Adrenal gland (tissue), 19 donors: ENCODE measurements at regions of chr11 and their contacts with region 1.

Region 1: DNA sequence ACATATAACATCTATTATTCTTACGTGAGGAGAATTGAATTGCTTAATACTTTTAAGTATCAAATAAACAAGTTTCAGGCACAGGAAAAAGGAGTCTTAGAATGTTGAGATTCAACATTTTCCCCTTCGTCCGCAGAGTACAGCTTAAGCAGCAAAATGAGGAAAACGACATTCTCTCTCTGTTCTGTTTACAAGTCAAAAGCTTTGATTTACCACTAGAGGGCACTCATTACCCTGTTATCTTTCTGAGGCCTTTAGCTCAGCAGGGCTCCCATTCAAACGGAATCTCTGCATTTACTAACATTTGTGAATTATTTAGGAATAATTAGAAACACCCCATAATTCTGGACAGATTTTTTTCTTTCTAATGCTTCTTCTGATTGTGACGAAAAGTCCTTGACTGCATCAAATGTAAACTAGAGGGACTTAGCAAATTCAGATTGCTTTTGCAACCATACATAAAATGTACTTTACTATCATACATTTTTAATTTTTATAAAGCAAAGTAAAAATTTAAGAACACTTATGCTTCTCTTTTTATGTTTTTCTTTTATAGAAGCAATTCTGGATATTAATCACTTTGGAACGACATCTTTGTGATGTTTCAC is 75.0 kb downstream of the JRKL start:
- DNase-seq: peak in 1 of 7 donors; percentile 11
- H3K4me3 ChIP-seq: no peak overlapping the region
- H3K27ac ChIP-seq: no peak overlapping the region
- H3K4me1 ChIP-seq: peaks cover 0 to 7% of the 10 kb centered on the region in 2 donors
- H3K27me3 ChIP-seq: no peaks in the 10 kb centered on the region
- CTCF ChIP-seq: peak; percentile 62 to 79 (median 73)
- POLR2A ChIP-seq: no peak

Region 2: DNA sequence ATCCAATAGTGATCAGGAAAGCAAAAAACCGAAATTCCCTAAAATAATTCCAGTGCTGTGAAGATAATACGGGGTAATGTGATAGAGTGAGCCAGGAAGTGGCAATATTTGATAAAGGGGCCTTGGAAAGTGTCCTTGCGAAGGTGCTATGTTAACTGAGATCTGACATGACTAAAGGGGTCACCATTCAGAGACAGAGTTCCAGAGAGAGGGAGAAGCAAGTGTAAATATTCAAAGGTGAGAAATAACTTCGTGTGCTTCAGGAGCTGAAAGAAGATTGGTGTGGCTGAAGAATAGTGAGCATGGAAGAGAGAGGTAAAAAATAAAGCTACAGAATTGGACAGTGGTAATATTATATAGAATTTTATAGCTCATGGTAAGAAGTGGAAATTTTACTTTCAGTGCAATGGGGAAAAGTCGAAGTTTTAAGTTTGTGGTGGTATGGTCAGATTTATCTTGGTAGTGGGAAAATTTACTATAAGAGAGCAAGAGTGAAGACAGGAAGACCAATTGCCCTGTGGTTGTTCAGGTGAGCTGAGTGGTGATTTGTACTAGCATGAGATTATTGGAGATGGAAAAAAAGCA is 89.5 kb after region 1 on chr11:
- intact Hi-C with region 1: no loop called
- DNase-seq: no peak
- H3K4me3 ChIP-seq: no peak overlapping the region
- H3K27ac ChIP-seq: no peak overlapping the region
- H3K4me1 ChIP-seq: no peaks in the 10 kb centered on the region
- H3K27me3 ChIP-seq: no peaks in the 10 kb centered on the region
- CTCF ChIP-seq: no peak
- POLR2A ChIP-seq: no peak

Region 3: GRCh38 chr11:96827164-96827563 is 362.4 kb after region 1 on chr11:
- intact Hi-C with region 1: loop called in 1 of 2 experiments (anchors 10 kb)
- DNase-seq: peak in 6 of 7 donors; percentile 16 to 32 (median 20)
- H3K4me3 ChIP-seq: no peak overlapping the region
- H3K27ac ChIP-seq: no peak overlapping the region
- H3K4me1 ChIP-seq: no peaks in the 10 kb centered on the region
- H3K27me3 ChIP-seq: no peaks in the 10 kb centered on the region
- CTCF ChIP-seq: peak in 5 of 6 experiments; percentile 33 to 56 (median 44)
- POLR2A ChIP-seq: no peak

Region 4: GRCh38 chr11:97140885-97141494 is 676.2 kb after region 1 on chr11:
- intact Hi-C with region 1: loop called in 1 of 2 experiments (anchors 5 kb)
- DNase-seq: peak in 2 of 7 donors; percentile 6 to 17
- H3K4me3 ChIP-seq: no peak overlapping the region
- H3K27ac ChIP-seq: no peak overlapping the region
- H3K4me1 ChIP-seq: no peaks in the 10 kb centered on the region
- H3K27me3 ChIP-seq: no peaks in the 10 kb centered on the region
- CTCF ChIP-seq: peak; percentile 35 to 80 (median 61)
- POLR2A ChIP-seq: no peak